OCI-LY7 (cell line): ENCODE measurements at regions of chr2 and their contacts with region 1.

Region 1: GRCh38 chr2:190209559-190209958 is 110.1 kb downstream of the HIBCH start:
- DNase-seq: no peak
- H3K4me3 ChIP-seq: no peak overlapping the region
- H3K27ac ChIP-seq: no peak overlapping the region
- H3K4me1 ChIP-seq: peaks cover 5% of the 10 kb centered on the region
- CTCF ChIP-seq: no peak

Region 2: DNA sequence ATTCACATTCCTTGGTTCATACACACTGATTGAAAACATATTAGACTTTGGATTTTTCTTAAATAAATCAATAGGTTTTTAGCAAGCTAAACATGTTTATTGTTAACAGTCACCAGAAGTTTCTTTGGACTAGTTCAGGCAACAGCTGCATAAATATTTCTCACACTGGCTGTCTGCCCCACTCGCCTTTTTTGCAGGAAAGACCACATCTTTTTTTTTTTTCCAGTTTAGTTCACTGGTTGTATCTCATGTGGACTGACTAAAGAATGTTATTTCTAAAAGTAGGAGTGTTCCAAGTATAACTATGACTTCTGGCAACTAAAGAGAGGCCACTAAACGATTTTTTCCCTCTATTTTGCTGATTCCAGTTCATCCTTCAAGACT is 660.1 kb before region 1 on chr2:
- CTCF ChIA-PET with region 1: no interaction called
- POLR2A ChIA-PET with region 1: no interaction called
- intact Hi-C with region 1: no loop called
- DNase-seq: no peak
- H3K4me3 ChIP-seq: no peak overlapping the region
- H3K27ac ChIP-seq: no peak overlapping the region
- H3K4me1 ChIP-seq: no peaks in the 10 kb centered on the region
- CTCF ChIP-seq: no peak

Region 3: DNA sequence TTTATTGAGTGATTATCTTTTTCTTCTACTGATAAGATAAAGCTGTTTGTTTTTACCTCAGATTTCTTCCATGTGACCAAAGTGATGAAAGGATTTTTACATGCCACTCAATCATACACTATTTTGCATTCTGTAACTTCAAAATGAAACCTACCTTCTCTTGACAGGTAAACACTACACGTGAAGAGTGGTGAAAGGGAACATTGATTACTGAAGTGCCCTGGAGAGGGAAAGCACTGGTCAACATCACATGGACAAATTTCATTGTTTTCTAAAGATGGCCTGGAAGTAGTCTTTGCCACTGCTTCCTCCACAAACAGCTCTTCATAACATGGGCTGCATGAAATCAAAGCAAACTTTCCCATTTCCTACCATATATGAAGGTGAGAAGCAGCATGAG is 10.0 kb before region 1 on chr2:
- CTCF ChIA-PET with region 1: no interaction called
- POLR2A ChIA-PET with region 1: interaction called, 11 read pairs
- intact Hi-C with region 1: no loop called
- DNase-seq: no peak
- H3K4me3 ChIP-seq: no peak overlapping the region
- H3K27ac ChIP-seq: no peak overlapping the region
- H3K4me1 ChIP-seq: no peaks in the 10 kb centered on the region
- CTCF ChIP-seq: no peak